Heart left ventricle (tissue), 16 donors: ENCODE measurements at regions of chr3 and their contacts with region 1.

Region 1: DNA sequence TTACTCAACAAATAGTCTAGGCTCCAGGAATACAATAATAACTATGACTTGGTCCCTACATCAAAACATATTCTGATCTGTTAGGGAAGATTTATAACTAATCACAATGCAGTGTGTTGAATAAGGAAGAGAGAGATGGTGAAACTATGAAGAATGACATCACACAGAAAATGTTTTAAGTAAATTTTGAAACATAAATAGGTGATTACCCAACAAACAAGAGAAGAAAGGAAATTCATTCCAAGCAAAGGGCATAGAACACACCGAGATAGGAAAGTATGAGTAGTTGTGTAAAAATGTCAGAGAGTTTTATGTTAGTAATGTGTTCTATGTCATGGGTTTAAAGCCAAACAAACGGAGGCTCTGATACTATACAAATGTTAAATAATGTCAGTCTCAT is 13.4 kb downstream of the SEC62 start:
- DNase-seq: no peak
- ATAC-seq: no peak
- H3K4me3 ChIP-seq: no peak overlapping the region
- H3K27ac ChIP-seq: no peak overlapping the region
- H3K4me1 ChIP-seq: peaks cover 0 to 6% (median 0%) of the 10 kb centered on the region in 12 donors
- H3K27me3 ChIP-seq: no peaks in the 10 kb centered on the region
- CTCF ChIP-seq: no peak
- POLR2A ChIP-seq: no peak

Region 2: DNA sequence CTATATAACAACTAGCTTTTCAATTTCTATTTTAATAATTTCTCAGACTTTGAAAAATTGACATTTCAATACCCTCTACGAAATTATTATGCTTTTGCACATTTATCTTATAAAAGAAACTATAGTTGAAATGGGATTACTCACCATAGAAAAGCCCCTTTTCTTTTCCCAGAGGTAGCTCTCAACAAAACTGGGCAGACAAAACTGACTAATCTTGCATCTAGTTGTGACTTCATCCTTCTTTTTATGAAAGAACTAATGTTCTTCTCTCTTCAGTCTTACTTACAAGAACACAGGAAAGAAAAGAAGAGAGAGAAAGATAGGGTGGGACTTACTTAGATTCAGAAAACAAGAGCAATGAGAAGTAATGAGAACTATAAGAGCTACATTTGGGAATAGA is 118.7 kb after region 1 on chr3:
- intact Hi-C with region 1: loop called in 1 of 10 experiments (anchors 5 kb)
- DNase-seq: no peak
- ATAC-seq: no peak
- H3K4me3 ChIP-seq: no peak overlapping the region
- H3K27ac ChIP-seq: no peak overlapping the region
- H3K4me1 ChIP-seq: no peaks in the 10 kb centered on the region
- H3K27me3 ChIP-seq: no peaks in the 10 kb centered on the region
- CTCF ChIP-seq: no peak
- POLR2A ChIP-seq: no peak

Region 3: DNA sequence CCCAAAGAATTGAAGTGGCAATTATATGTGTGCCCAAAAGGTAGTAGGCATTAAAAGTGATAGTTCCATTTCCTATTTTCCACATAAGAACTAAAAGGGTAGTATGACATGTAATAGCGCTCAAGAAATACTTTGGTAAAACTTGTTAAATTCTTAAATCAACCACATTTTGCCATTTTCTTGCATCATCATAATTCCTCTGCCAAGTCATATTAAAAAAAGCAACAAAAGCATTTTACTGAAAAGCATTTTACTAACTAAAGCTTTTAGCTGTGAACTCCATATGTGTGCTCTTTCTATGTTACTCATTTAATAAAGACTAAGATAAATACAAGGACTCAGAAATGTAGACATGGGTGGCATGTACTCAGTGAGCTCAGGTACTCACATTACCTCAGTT is 127.9 kb after region 1 on chr3:
- intact Hi-C with region 1: loop called in 2 of 10 experiments (anchors 5 to 10 kb)
- DNase-seq: no peak
- ATAC-seq: no peak
- H3K4me3 ChIP-seq: no peak overlapping the region
- H3K27ac ChIP-seq: no peak overlapping the region
- H3K4me1 ChIP-seq: peaks cover 0 to 14% (median 0%) of the 10 kb centered on the region in 12 donors
- H3K27me3 ChIP-seq: no peaks in the 10 kb centered on the region
- CTCF ChIP-seq: no peak
- POLR2A ChIP-seq: no peak

Region 4: GRCh38 chr3:170117134-170117533 is 137.1 kb after region 1 on chr3:
- intact Hi-C with region 1: loop called in 1 of 10 experiments (anchors 10 kb)
- DNase-seq: no peak
- ATAC-seq: no peak
- H3K4me3 ChIP-seq: no peak overlapping the region
- H3K27ac ChIP-seq: no peak overlapping the region
- H3K4me1 ChIP-seq: no peaks in the 10 kb centered on the region
- H3K27me3 ChIP-seq: no peaks in the 10 kb centered on the region
- CTCF ChIP-seq: no peak
- POLR2A ChIP-seq: no peak